T-cell (primary cell): ENCODE measurements at regions of chr3 and their contacts with region 1.

Region 1: GRCh38 chr3:45123030-45123429 is 23.1 kb downstream of the CDCP1 start:
- DNase-seq: no peak
- ATAC-seq: no peak
- H3K4me3 ChIP-seq: no peak overlapping the region
- H3K4me3 Mint-ChIP-seq: no peak overlapping the region
- H3K27ac ChIP-seq: no peak overlapping the region
- H3K27ac Mint-ChIP-seq: no peak overlapping the region
- H3K4me1 ChIP-seq: peaks cover 8 to 12% of the 10 kb centered on the region in 2 experiments
- H3K4me1 Mint-ChIP-seq: peaks cover 12 to 22% (median 13%) of the 10 kb centered on the region in 3 donors
- H3K27me3 ChIP-seq: peaks cover 0 to 15% of the 10 kb centered on the region in 2 experiments
- H3K27me3 Mint-ChIP-seq: peaks cover 0 to 10% of the 10 kb centered on the region in 2 donors

Region 2: GRCh38 chr3:45749880-45750279 is 626.9 kb after region 1 on chr3:
- CTCF ChIA-PET with region 1: interaction called in 1 of 2 experiments, 11 read pairs
- POLR2A ChIA-PET with region 1: no interaction called
- DNase-seq: no peak
- ATAC-seq: no peak
- H3K4me3 ChIP-seq: no peak overlapping the region
- H3K4me3 Mint-ChIP-seq: no peak overlapping the region
- H3K27ac ChIP-seq: no peak overlapping the region
- H3K27ac Mint-ChIP-seq: no peak overlapping the region
- H3K4me1 ChIP-seq: no peaks in the 10 kb centered on the region
- H3K4me1 Mint-ChIP-seq: peaks cover 0 to 2% (median 0%) of the 10 kb centered on the region in 3 donors
- H3K27me3 ChIP-seq: no peaks in the 10 kb centered on the region
- H3K27me3 Mint-ChIP-seq: no peaks in the 10 kb centered on the region